ENCODE measurements at regions of chr9 and their contacts with region 1.

Region 1: DNA sequence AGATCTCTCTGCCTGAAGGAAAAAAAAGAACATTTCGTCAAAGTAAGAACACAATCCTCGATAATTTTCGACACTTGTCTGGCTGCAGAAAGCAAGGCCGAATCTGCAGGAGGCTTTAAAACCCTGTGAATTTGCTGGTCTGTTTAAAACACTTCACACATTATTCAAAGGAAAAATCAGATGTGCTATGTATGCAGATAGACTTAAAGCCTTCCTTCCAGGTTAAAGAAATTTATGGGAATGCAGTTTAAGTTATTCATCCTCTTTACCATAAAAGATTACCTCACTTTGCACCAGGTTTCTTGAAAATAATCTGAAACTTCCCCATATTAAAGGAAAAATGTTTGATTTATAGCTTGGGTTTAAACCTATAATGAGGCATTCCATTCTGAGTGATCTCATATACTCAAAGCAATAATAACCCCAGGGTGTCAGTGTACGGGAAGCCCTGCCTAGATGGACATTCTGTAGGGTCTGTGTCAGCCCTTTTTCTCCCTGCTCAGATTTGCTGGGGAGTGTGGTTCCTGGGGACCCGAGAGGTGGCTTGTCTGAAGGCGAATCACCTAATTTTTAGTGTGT is 323.5 kb upstream of the SLC24A2 start:
- DNase-seq: no peak
- H3K4me3 ChIP-seq: no peak overlapping the region
- H3K27ac ChIP-seq: no peak overlapping the region
- H3K4me1 ChIP-seq: no peaks in the 10 kb centered on the region
- H3K27me3 ChIP-seq: no peaks in the 10 kb centered on the region
- CTCF ChIP-seq: no peak
- EP300 ChIP-seq: no peak
- POLR2A ChIP-seq: no peak

Region 2: DNA sequence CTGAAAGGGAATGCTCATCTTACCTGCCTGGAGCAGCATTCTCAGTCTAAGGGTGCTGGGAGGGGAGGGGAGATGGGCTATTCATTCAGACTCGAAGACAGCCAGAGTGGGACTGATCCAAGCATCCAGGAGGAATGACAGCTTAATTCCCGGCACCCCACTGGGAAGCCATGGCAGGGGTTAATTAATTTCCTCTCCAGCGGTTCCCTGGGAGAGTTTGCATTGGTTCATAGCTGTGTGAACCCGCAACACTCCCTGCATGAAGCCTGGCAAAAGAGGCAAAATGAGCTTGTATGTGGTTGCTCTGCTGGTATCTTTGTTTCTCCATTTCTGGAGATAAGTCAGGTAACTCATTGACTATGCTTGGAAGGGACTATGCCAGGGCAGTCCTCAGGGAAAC is 77.6 kb after region 1 on chr9:
- intact Hi-C with region 1: loop called (anchors 10 kb)
- DNase-seq: no peak
- H3K4me3 ChIP-seq: no peak overlapping the region
- H3K27ac ChIP-seq: no peak overlapping the region
- H3K4me1 ChIP-seq: no peaks in the 10 kb centered on the region
- H3K27me3 ChIP-seq: no peaks in the 10 kb centered on the region
- CTCF ChIP-seq: no peak
- EP300 ChIP-seq: no peak
- POLR2A ChIP-seq: no peak

Measured in esophagus muscularis mucosa (tissue), 4 donors.